PC-9 (cell line): ENCODE measurements at regions of chr4 and their contacts with region 1.

Region 1: GRCh38 chr4:78047366-78047765 is 9.8 kb upstream of the FRAS1 start:
- DNase-seq: no peak
- H3K4me3 ChIP-seq: no peak overlapping the region
- H3K27ac ChIP-seq: no peak overlapping the region
- H3K4me1 ChIP-seq: no peaks in the 10 kb centered on the region
- H3K27me3 ChIP-seq: no peaks in the 10 kb centered on the region
- CTCF ChIP-seq: no peak

Region 2: DNA sequence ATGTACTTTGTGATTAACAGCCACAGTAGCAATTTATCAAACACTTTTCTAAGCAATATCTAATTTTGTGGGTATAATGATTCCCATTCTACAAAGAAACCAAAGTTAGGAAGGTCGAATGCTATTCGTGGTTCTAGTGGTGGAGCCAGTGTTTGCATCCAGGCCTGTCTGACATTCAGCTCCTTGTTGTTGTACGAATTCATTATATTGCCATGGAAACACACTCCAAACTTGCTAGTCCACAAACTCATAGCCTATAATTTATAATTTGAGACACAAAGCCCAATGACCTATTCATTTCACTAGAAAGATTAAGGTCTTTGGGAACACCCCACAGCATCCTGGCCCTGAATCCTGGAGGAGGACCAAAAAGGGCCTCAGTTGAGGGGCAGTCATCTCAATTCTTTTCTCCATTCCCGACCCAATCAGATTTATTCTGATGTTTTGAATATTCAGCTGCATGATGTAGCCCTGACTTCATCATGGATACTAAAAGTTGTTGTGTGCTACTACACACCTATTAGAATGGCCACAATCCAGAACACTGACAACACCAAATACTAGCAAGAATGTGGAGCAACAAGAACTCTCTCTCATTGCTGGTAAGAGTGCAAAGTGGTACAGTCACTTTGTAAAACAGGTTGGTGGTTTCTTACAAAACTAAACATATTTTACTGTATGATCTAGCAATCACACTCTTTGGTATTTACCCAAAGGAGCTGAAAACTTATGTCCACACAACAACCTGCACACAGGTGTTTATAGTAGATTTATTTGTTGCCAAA is 42.1 kb before region 1 on chr4:
- CTCF ChIA-PET with region 1: no interaction called
- POLR2A ChIA-PET with region 1: no interaction called
- intact Hi-C with region 1: loop called (anchors 5 kb)
- DNase-seq: no peak
- H3K4me3 ChIP-seq: no peak overlapping the region
- H3K27ac ChIP-seq: no peak overlapping the region
- H3K4me1 ChIP-seq: no peaks in the 10 kb centered on the region
- H3K27me3 ChIP-seq: no peaks in the 10 kb centered on the region
- CTCF ChIP-seq: no peak

Region 3: DNA sequence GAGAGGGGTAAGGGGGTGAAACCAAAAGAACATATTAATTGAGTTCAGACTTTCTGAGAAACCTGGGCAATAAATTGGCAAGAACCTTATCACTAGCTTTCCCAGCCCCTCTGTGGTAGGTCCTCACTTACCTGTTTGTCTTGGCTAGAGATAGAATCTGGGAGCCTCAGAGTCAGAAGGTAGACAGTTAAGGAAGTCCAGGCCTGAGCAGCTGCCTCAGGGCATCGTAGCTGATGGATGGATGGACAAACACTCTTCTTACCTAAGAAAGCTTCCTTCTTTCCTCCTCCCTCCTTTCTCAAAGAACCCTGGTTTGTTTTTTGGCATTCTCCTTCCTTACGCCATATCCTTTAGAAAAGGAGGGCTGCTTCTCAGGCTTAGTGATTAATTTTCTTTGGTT is 34.2 kb after region 1 on chr4:
- CTCF ChIA-PET with region 1: no interaction called
- POLR2A ChIA-PET with region 1: no interaction called
- intact Hi-C with region 1: no loop called
- DNase-seq: peak in 1 of 2 experiments; percentile 0
- H3K4me3 ChIP-seq: no peak overlapping the region
- H3K27ac ChIP-seq: no peak overlapping the region
- H3K4me1 ChIP-seq: no peaks in the 10 kb centered on the region
- H3K27me3 ChIP-seq: no peaks in the 10 kb centered on the region
- CTCF ChIP-seq: no peak

Region 4: DNA sequence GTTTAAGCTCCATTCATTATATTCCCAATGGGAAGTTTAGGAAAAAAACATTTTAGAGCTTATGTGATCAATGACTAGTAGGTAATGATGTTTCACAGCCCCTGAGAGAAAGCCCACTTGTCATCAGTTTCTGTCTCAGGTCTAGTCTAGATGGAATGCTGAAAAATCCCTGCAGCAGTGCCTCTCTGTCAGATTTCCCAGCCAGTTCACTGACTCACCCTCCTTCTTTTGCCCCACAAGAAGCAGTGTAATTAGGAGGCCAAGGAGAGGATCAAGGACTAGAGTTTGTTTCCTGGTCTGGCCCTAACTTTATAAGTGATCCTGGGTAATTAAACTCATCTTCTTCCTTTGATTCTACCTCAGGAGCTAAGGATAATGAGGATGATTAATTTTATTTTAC is 385.5 kb after region 1 on chr4:
- CTCF ChIA-PET with region 1: no interaction called
- POLR2A ChIA-PET with region 1: no interaction called
- intact Hi-C with region 1: no loop called
- DNase-seq: no peak
- H3K4me3 ChIP-seq: no peak overlapping the region
- H3K27ac ChIP-seq: no peak overlapping the region
- H3K4me1 ChIP-seq: no peaks in the 10 kb centered on the region
- H3K27me3 ChIP-seq: no peaks in the 10 kb centered on the region
- CTCF ChIP-seq: no peak